IMR-90 (cell line): ENCODE measurements at regions of chr6 and their contacts with region 1.

Region 1: DNA sequence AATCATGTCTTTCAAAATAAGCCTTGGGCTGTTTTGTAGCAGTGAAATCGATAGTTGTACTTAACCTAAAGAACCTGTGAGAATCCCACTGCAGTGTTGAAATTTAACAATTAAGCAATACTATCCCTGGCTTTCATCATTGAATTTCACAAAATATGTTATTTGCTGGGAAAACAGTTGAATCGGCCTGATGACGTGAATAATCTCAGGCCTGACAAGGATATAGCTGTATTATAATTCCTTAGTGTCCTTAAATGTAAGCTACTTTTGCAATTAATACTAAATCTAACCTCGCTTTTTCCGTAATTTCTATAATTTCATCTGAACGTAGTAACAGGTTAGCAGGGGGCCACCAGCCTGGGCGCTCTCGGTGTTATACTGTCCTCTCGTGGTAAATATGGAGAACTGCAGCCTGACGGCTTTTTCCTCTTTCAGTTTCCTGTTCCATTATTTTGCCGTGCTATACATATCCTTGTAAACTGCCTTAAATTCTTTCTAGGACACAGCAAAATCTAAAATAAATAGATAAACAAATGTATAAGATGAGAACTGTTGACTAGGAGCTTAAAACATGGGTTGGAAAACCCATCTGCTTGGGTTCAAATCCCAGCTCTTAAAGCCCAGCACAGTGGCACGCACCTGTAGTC is 24.0 kb downstream of the MTFR2 start:
- DNase-seq: peak; percentile 67
- ATAC-seq: peak; percentile 92
- H3K4me3 ChIP-seq: no peak overlapping the region
- H3K27ac ChIP-seq: peak overlapping the region; percentile 18; the same call in 1 of the 2 replicates
- H3K4me1 ChIP-seq: peaks cover 7% of the 10 kb centered on the region
- H3K27me3 ChIP-seq: no peaks in the 10 kb centered on the region
- CTCF ChIP-seq: peak; percentile 100; the same call in 1 of the 2 replicates
- POLR2A ChIP-seq: peak; percentile 74
- RAD21 ChIP-seq: peak; percentile 100

Region 2: GRCh38 chr6:135451693-135452092 is 774.5 kb before region 1 on chr6:
- CTCF ChIA-PET with region 1: interaction called, 8 read pairs
- POLR2A ChIA-PET with region 1: no interaction called
- dilution Hi-C with region 1: no loop called
- in situ Hi-C with region 1: no loop called
- intact Hi-C with region 1: loop called (anchors 1 kb)
- DNase-seq: peak; percentile 43
- ATAC-seq: peak; percentile 29; the same call in 1 of the 2 replicates
- H3K4me3 ChIP-seq: no peak overlapping the region
- H3K27ac ChIP-seq: no peak overlapping the region
- H3K4me1 ChIP-seq: no peaks in the 10 kb centered on the region
- H3K27me3 ChIP-seq: no peaks in the 10 kb centered on the region
- CTCF ChIP-seq: peak; percentile 68
- POLR2A ChIP-seq: no peak
- RAD21 ChIP-seq: peak; percentile 72

Region 3: GRCh38 chr6:135535989-135536414 is 690.1 kb before region 1 on chr6:
- CTCF ChIA-PET with region 1: interaction called, 26 read pairs
- POLR2A ChIA-PET with region 1: no interaction called
- dilution Hi-C with region 1: no loop called
- in situ Hi-C with region 1: loop called (anchors 5 kb)
- intact Hi-C with region 1: loop called (anchors 1 kb)
- DNase-seq: peak; percentile 98
- ATAC-seq: peak; percentile 85
- H3K4me3 ChIP-seq: no peak overlapping the region
- H3K27ac ChIP-seq: peak overlapping the region; percentile 24
- H3K4me1 ChIP-seq: peaks cover 9% of the 10 kb centered on the region
- H3K27me3 ChIP-seq: no peaks in the 10 kb centered on the region
- CTCF ChIP-seq: peak; percentile 80
- POLR2A ChIP-seq: no peak
- RAD21 ChIP-seq: peak; percentile 83

Region 4: DNA sequence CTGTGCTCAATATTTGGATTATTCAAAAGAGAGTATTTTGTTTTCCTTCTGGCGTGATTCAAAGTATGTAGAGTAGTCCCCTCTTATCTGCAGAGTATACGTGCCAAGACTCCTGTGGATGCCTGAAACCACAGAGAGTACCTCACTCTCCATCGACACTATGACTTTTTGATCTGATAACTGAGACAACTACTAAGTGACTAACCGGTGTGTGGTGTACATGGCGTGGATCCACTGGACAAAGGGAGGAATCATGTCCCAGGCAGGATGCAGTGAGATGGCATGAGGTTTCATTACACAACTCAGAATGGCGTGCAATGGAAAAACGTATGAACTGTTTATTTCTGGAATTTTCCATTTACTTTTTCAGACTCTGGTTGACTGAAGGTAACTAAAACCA is 486.9 kb before region 1 on chr6:
- CTCF ChIA-PET with region 1: no interaction called
- POLR2A ChIA-PET with region 1: no interaction called
- dilution Hi-C with region 1: no loop called
- in situ Hi-C with region 1: no loop called
- intact Hi-C with region 1: loop called (anchors 10 kb)
- DNase-seq: peak; percentile 95
- ATAC-seq: peak; percentile 90
- H3K4me3 ChIP-seq: peak overlapping the region; percentile 16; the same call in 1 of the 2 replicates
- H3K27ac ChIP-seq: peak overlapping the region; percentile 53
- H3K4me1 ChIP-seq: no peaks in the 10 kb centered on the region
- H3K27me3 ChIP-seq: no peaks in the 10 kb centered on the region
- CTCF ChIP-seq: no peak
- POLR2A ChIP-seq: no peak
- RAD21 ChIP-seq: no peak

Region 5: GRCh38 chr6:135909737-135910387 is 316.3 kb before region 1 on chr6:
- CTCF ChIA-PET with region 1: interaction called, 8 read pairs
- POLR2A ChIA-PET with region 1: no interaction called
- dilution Hi-C with region 1: no loop called
- in situ Hi-C with region 1: no loop called
- intact Hi-C with region 1: loop called (anchors 10 kb)
- DNase-seq: peak; percentile 36
- ATAC-seq: no peak
- H3K4me3 ChIP-seq: no peak overlapping the region
- H3K27ac ChIP-seq: no peak overlapping the region
- H3K4me1 ChIP-seq: peaks cover 14% of the 10 kb centered on the region
- H3K27me3 ChIP-seq: no peaks in the 10 kb centered on the region
- CTCF ChIP-seq: peak; percentile 36
- POLR2A ChIP-seq: no peak
- RAD21 ChIP-seq: peak; percentile 44; the same call in 1 of the 2 replicates

Region 6: DNA sequence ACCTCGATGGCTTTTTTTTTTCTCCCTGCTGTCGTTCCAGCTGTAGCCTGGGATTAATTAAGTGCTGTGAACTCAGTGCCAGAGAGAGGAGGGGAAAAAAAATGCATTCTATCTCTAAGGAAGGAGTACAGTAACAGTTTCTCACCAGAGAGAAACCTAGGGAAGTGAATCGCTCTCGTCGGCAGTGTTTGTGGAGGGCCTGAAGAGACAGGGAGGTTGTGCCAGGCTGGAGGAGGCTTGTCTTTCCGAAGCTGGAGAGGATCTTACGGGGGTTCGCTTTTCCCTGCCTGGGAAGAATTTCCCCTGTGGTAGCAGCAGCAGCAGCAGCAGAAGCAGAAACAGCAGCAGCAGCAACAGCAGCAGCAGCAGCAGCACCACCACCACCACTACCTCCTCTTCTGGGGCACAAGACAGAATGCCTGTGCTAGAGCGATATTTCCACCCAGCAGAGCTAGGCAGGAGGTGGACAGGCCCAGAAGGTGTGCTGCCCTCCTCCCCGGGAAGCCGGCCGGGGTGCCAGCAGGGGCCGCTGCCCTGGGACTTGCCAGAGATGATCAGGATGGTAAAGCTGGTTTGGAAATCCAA is 188.2 kb before region 1 on chr6:
- CTCF ChIA-PET with region 1: interaction called, 7 read pairs
- POLR2A ChIA-PET with region 1: no interaction called
- dilution Hi-C with region 1: no loop called
- in situ Hi-C with region 1: no loop called
- intact Hi-C with region 1: loop called (anchors 2 kb)
- DNase-seq: peak; percentile 72
- ATAC-seq: peak; percentile 55
- H3K4me3 ChIP-seq: peak overlapping the region; percentile 88
- H3K27ac ChIP-seq: peak overlapping the region; percentile 98
- H3K4me1 ChIP-seq: peaks cover 24% of the 10 kb centered on the region
- H3K27me3 ChIP-seq: no peaks in the 10 kb centered on the region
- CTCF ChIP-seq: peak; percentile 40
- POLR2A ChIP-seq: peak; percentile 45; the same call in 1 of the 2 replicates
- RAD21 ChIP-seq: no peak; the same call in 1 of the 2 replicates

Region 7: GRCh38 chr6:136290410-136291010 is 64.4 kb after region 1 on chr6:
- CTCF ChIA-PET with region 1: no interaction called
- POLR2A ChIA-PET with region 1: no interaction called
- dilution Hi-C with region 1: no loop called
- in situ Hi-C with region 1: no loop called
- intact Hi-C with region 1: no loop called
- DNase-seq: peak; percentile 85
- ATAC-seq: peak; percentile 9
- H3K4me3 ChIP-seq: peak overlapping the region; percentile 54
- H3K27ac ChIP-seq: peak overlapping the region; percentile 96
- H3K4me1 ChIP-seq: 0 out of 2 replicates have a peak, but pooled peaks cover 2% of the 10 kb centered on the region
- H3K27me3 ChIP-seq: no peaks in the 10 kb centered on the region; the same call in 1 of the 2 replicates
- CTCF ChIP-seq: no peak
- POLR2A ChIP-seq: no peak
- RAD21 ChIP-seq: no peak